ENCODE measurements at regions of chr9 and their contacts with region 1.

Region 1: GRCh38 chr9:14451949-14452348 is 138.0 kb upstream of the NFIB start:
- DNase-seq: no peak
- ATAC-seq: peak; percentile 52; the same call in 2 of the 3 replicates
- H3K4me3 ChIP-seq: no peak overlapping the region
- H3K27ac ChIP-seq: no peak overlapping the region
- H3K4me1 ChIP-seq: no peaks in the 10 kb centered on the region
- H3K27me3 ChIP-seq: peaks cover 0 to 2% of the 10 kb centered on the region in 2 experiments; a peak in 1 of 4 replicates
- CTCF ChIP-seq: no peak
- EP300 ChIP-seq: no peak
- POLR2A ChIP-seq: no peak
- RAD21 ChIP-seq: no peak

Region 2: GRCh38 chr9:14511452-14511851 is 59.5 kb after region 1 on chr9:
- CTCF ChIA-PET with region 1: no interaction called
- POLR2A ChIA-PET with region 1: no interaction called
- RAD21 ChIA-PET with region 1: no interaction called
- SMC1A ChIA-PET with region 1: no interaction called
- in situ Hi-C with region 1: no loop called
- intact Hi-C with region 1: loop called (anchors 5 kb)
- DNase-seq: no peak
- ATAC-seq: peak; percentile 69
- H3K4me3 ChIP-seq: no peak overlapping the region
- H3K27ac ChIP-seq: no peak overlapping the region
- H3K4me1 ChIP-seq: no peaks in the 10 kb centered on the region
- H3K27me3 ChIP-seq: no peaks in the 10 kb centered on the region; a peak in 1 of 4 replicates
- CTCF ChIP-seq: no peak
- EP300 ChIP-seq: no peak
- POLR2A ChIP-seq: no peak
- RAD21 ChIP-seq: no peak

Region 3: GRCh38 chr9:14573333-14573732 is 121.4 kb after region 1 on chr9:
- CTCF ChIA-PET with region 1: no interaction called
- POLR2A ChIA-PET with region 1: no interaction called
- RAD21 ChIA-PET with region 1: no interaction called
- SMC1A ChIA-PET with region 1: no interaction called
- in situ Hi-C with region 1: no loop called
- intact Hi-C with region 1: no loop called
- DNase-seq: no peak
- ATAC-seq: no peak
- H3K4me3 ChIP-seq: no peak overlapping the region
- H3K27ac ChIP-seq: no peak overlapping the region
- H3K4me1 ChIP-seq: no peaks in the 10 kb centered on the region
- H3K27me3 ChIP-seq: no peaks in the 10 kb centered on the region
- CTCF ChIP-seq: no peak
- EP300 ChIP-seq: no peak
- POLR2A ChIP-seq: no peak
- RAD21 ChIP-seq: no peak